A549 (cell line): ENCODE measurements at regions of chr7 and their contacts with region 1.

Region 1: GRCh38 chr7:876167-876967 is at the start of gene GET4:
- DNase-seq: peak; percentile 79 to 96
- ATAC-seq: peak; percentile 87 to 89
- H3K4me3 ChIP-seq: peak within 1 kb of the TSS; percentile 69
- H3K27ac ChIP-seq: peak within 1 kb of the TSS; percentile 93 to 97
- H3K4me1 ChIP-seq: peaks cover 22% of the 10 kb centered on the region
- CTCF ChIP-seq: no peak; the same call in 2 of the 3 replicates
- EP300 ChIP-seq: no peak
- POLR2A ChIP-seq: peak; percentile 79
- RAD21 ChIP-seq: no peak
- polyA plus RNA-seq, gene GET4: 21.5 and 26.1 TPM in 2 replicates

Region 2: GRCh38 chr7:322111-322671 is 554.2 kb before region 1 on chr7:
- CTCF ChIA-PET with region 1: interaction called, 11 read pairs
- POLR2A ChIA-PET with region 1: no interaction called
- DNase-seq: peak; percentile 49 to 51
- ATAC-seq: peak; percentile 83 to 94
- H3K4me3 ChIP-seq: 0 out of 3 replicates have a peak overlapping the region, but pooled peaks have one; percentile 1
- H3K27ac ChIP-seq: peak overlapping the region in 1 of 2 experiments; percentile 63; a peak in 2 of 6 replicates
- H3K4me1 ChIP-seq: peaks cover 4% of the 10 kb centered on the region; the same call in 1 of the 3 replicates
- CTCF ChIP-seq: peak; percentile 94
- EP300 ChIP-seq: no peak
- POLR2A ChIP-seq: no peak
- RAD21 ChIP-seq: peak; percentile 82 to 98

Region 3: GRCh38 chr7:816300-816750 is 60.0 kb before region 1 on chr7:
- CTCF ChIA-PET with region 1: interaction called, 22 read pairs
- POLR2A ChIA-PET with region 1: no interaction called
- DNase-seq: peak; percentile 97 to 98
- ATAC-seq: peak; percentile 91 to 95
- H3K4me3 ChIP-seq: peak overlapping the region; percentile 97
- H3K27ac ChIP-seq: peak overlapping the region; percentile 89 to 95
- H3K4me1 ChIP-seq: peaks cover 17% of the 10 kb centered on the region
- CTCF ChIP-seq: no peak
- EP300 ChIP-seq: no peak
- POLR2A ChIP-seq: peak; percentile 53
- RAD21 ChIP-seq: no peak

Region 4: DNA sequence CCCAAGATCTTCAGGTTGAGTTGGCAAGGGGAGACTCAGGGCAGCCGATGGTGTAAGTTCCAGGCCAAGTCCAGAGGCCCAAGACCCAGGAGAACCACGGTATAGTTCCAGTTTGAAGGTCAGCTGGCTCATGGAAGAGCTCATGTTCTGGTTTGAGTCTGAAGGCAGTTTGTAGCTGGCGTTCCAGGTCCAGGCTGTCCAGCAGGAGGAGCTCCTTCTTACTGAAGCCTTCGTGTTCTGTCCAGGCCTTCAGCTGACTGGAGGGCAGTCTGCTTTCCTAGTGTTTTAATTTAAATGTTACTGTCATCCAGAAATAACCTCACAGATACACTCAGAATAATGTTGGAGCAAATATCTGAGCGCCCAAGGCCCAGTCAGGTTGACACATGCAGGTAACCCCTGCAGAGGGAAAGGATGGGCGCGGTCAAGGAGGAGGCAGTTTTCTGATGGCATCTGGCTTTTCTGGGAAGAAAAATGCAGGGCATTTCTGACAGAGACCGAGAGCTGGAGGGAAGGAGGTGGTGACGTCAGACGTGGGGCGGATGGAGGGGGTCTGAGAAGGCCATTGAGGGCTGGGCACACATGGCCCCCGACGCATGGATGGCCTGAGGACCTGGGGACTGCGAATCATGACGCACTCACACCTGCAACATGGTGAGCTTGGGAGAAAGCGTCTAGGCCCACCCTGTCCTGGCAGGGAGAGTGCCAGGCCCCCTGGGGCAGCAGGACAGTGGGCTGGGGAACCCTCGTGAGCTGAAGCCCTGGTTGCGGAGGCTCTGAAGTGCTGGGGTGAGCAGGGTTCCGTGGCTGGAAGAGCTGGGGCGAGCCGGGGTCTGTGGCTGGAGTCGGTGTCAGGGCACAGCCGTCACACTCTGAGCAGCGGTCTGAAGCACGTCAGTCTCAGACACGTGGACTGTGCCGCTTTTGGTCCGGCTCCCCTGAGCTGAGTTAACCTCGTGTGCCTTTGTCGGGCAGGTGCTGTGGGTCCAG is 39.7 kb before region 1 on chr7:
- CTCF ChIA-PET with region 1: interaction called, 39 read pairs
- POLR2A ChIA-PET with region 1: interaction called, 4 read pairs
- DNase-seq: peak; percentile 18 to 70
- ATAC-seq: peak; percentile 75 to 81; a peak in 5 of 6 replicates
- H3K4me3 ChIP-seq: no peak overlapping the region
- H3K27ac ChIP-seq: no peak overlapping the region
- H3K4me1 ChIP-seq: peaks cover 22% of the 10 kb centered on the region
- CTCF ChIP-seq: peak; percentile 53
- EP300 ChIP-seq: no peak
- POLR2A ChIP-seq: no peak
- RAD21 ChIP-seq: peak in 1 of 2 experiments; percentile 38; a peak in 2 of 5 replicates

Region 5: DNA sequence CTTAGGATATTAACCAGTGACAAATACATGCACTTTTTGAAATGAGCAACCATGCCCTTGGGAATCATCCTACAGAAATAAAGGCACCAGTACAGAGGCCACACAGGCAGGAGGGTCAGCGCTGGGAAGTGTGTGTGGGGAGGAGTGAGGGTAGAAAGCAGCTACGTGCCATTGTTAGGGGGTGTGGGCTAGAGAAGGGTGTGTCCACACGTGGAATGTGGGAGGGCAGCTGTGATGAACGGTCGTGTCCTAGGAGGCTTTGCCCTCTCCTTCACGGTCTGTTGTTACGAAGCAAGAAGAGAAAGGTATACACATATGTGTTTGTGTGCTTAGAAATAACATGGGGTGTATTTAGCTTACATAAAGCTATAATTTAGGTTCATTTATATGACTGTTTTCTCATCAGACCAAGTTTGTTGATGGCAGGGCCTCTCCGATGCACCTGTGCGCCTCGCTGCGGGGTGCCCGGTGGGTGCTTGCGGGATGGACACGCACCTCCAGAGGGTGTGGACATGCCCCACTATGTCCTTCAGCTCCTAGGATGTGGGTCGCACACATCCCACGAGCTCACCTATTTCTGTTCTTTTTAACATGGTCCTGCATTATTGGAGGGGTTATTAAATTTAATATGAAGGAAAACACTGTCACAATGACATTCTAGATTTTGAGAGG is 16.9 kb before region 1 on chr7:
- CTCF ChIA-PET with region 1: interaction called, 28 read pairs
- POLR2A ChIA-PET with region 1: no interaction called
- DNase-seq: no peak
- ATAC-seq: no peak
- H3K4me3 ChIP-seq: no peak overlapping the region
- H3K27ac ChIP-seq: no peak overlapping the region
- H3K4me1 ChIP-seq: peaks cover 4% of the 10 kb centered on the region; the same call in 1 of the 3 replicates
- CTCF ChIP-seq: no peak
- EP300 ChIP-seq: no peak
- POLR2A ChIP-seq: no peak
- RAD21 ChIP-seq: no peak